Stomach (tissue), 19 donors: ENCODE measurements at regions of chr1 and their contacts with region 1.

Region 1: DNA sequence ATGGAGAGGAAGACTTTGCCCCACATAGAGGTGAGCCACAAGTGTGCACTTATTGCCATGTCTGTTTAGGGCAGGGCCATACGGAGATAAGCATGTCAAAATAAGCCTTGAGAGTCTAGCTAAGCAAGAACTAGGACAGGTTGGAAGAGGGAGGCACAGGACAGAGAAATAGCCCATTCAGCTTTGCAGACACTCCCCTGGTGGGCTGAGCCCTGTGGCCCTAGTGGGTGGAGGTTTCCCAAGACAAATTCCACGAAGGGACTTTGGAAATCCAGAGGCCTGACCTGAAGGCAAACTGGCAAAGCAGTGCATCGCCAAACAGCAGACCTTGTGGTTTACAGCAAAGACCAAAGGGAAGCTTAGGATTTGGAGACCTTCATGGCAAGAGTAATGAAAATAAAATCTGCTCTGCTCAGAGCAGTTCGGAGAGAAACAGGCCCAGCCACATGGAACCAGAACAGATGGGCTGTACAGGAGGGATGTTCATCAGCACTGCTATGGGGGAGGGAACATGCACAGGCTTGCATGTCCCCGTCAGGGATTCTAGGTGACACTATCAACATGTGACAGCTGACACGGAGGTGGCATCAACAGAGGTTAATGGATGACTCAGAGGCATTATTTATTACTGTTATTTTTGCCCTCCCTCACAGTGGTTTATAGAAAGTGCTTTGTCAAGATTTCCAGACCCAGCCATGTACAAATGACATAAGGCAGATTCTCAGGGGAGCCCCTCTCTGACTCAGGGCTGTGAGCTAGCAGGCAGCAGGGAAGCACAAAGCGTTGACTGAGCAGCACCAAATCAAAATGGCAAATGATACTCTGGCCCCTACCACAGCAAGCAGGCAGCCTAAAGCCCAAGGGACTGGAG is 90.1 kb upstream of the IRF2BP2 start:
- DNase-seq: peak in 1 of 2 donors; percentile 72
- H3K4me3 ChIP-seq: no peak overlapping the region
- H3K27ac ChIP-seq: peak overlapping the region in 4 of 5 donors; percentile 27 to 69 (median 31)
- H3K4me1 ChIP-seq: peaks cover 7 to 19% (median 12%) of the 10 kb centered on the region in 4 donors
- H3K27me3 ChIP-seq: no peaks in the 10 kb centered on the region
- CTCF ChIP-seq: no peak
- EP300 ChIP-seq: no peak
- POLR2A ChIP-seq: no peak

Region 2: GRCh38 chr1:234621657-234622335 is 78.2 kb before region 1 on chr1:
- intact Hi-C with region 1: loop called (anchors 10 kb)
- DNase-seq: peak in 1 of 2 donors; percentile 82
- H3K4me3 ChIP-seq: no peak overlapping the region
- H3K27ac ChIP-seq: peak overlapping the region in 2 of 5 donors; percentile 10 to 25
- H3K4me1 ChIP-seq: peaks cover 8 to 57% (median 26%) of the 10 kb centered on the region in 4 donors
- H3K27me3 ChIP-seq: no peaks in the 10 kb centered on the region
- CTCF ChIP-seq: no peak
- EP300 ChIP-seq: no peak
- POLR2A ChIP-seq: no peak